ENCODE measurements at regions of chr2 and their contacts with region 1.

Region 1: GRCh38 chr2:98608116-98608999 is at the starts of genes COA5 and UNC50:
- DNase-seq: peak; percentile 89
- total RNA-seq, gene COA5: 20.5 and 68.5 TPM in 2 replicates
- total RNA-seq, gene UNC50: 44.9 and 76.3 TPM in 2 replicates

Region 2: GRCh38 chr2:98502556-98503335 is 105.6 kb before region 1 on chr2:
- in situ Hi-C with region 1: no loop called
- DNase-seq: no peak

Region 3: DNA sequence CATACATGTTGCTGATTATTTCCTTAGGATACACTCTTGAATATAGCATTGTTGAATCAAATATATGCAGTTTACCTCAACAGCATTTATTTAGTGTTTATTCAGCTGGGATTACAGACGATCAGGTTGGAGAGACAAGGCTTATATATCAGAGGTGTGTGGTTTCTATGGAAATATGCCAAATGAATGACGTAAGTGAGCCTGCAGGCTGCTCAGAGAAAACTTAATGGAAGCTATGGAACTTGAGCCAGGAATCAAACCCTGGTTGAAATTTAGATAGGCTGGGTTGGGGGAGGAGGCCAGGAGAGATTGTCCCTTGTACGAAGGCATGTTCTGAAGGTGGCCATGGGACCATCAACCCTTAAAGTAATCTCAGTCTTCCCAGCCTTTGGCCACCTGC is 84.2 kb before region 1 on chr2:
- in situ Hi-C with region 1: no loop called
- DNase-seq: no peak

Region 4: DNA sequence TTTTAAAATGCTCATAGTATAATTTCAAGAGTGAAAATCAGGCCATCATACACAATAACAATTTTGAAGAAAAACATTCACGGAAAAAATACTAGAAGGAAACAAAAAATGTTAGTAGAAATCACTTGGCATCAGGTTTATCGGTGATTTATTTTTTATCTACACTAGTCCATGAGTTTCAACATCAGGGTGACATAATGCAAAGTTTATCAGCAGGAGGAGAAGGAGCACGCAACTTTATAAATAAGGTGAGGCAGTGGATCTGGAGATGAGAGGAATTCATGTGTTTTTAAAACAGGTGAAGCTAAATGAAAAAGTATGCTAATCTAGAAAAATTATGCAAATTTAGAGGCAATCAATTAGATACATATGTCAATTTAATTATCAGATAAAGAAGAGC is 68.4 kb after region 1 on chr2:
- in situ Hi-C with region 1: no loop called
- DNase-seq: no peak

Region 5: DNA sequence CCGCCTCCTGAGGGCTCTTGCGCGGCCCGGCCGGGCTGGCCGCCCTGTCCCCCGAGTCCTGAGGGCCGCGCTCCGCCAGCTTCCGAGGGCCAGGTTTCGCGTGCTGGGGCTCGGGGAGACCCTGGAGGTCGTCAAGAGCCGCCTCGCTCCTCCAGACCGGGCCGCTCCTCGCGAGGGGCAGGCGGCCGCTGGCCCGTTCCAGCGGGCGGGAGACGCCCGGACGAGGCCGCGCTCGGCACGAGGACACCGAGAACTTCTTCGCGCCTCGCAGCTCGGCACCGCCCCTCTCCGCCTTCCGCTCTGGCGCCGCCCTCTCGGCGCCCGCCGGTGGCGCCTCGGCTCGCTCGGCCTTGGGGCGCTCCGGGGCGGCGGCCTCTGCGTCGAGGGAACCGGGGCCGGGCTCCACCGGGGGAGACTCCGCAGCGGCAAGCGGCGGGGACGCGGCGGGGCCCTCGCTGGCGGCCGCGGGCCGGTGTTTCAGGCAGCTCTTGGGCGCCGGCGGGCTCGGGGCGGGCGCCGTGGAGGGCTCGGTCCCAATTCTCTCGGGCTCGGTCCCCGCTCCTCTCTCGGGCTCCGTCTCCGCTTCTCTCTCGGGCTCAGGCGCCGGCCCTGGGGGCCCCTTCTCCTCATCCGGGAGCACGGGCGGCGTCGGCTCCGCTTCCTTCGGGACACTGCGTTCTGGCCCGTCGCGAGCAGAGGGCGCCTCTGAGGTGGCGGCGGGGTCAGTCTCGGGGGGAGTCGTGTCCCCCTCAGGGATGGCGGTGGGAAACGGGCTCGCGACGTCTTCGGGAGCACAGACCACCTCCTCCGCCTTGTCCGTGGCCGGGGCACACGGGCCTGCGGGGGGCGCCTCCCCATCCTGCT is 214.2 kb after region 1 on chr2:
- in situ Hi-C with region 1: no loop called
- DNase-seq: no peak

Region 6: GRCh38 chr2:99066075-99066958 is 458.0 kb after region 1 on chr2:
- in situ Hi-C with region 1: loop called (anchors 25 kb)
- DNase-seq: peak; percentile 51

Measured in Caki2 (cell line).